Heart left ventricle (tissue), 16 donors: ENCODE measurements at regions of chr5 and their contacts with region 1.

Region 1: GRCh38 chr5:181159286-181159829 is 12.0 kb downstream of the OR2V2 start:
- DNase-seq: peak; percentile 79 to 91 (median 81)
- ATAC-seq: peak; percentile 72 to 94 (median 92)
- H3K4me3 ChIP-seq: no peak overlapping the region
- H3K27ac ChIP-seq: peak overlapping the region in 1 of 12 donors; percentile 81
- H3K4me1 ChIP-seq: peaks cover 0 to 14% (median 2%) of the 10 kb centered on the region in 12 donors
- H3K27me3 ChIP-seq: peaks cover 0 to 14% (median 9%) of the 10 kb centered on the region in 9 donors
- CTCF ChIP-seq: peak; percentile 83 to 91 (median 85)
- POLR2A ChIP-seq: no peak

Region 2: GRCh38 chr5:181052672-181053487 is 106.5 kb before region 1 on chr5:
- intact Hi-C with region 1: loop called in 1 of 10 experiments (anchors 10 kb)
- DNase-seq: peak in 2 of 5 donors; percentile 49 to 65
- ATAC-seq: peak in 3 of 4 donors; percentile 36 to 55 (median 47)
- H3K4me3 ChIP-seq: peak overlapping the region; percentile 34 to 72 (median 60)
- H3K27ac ChIP-seq: peak overlapping the region; percentile 57 to 94 (median 88)
- H3K4me1 ChIP-seq: peaks cover 0 to 42% (median 18%) of the 10 kb centered on the region in 12 donors
- H3K27me3 ChIP-seq: peaks cover 20 to 88% (median 66%) of the 10 kb centered on the region in 9 donors
- CTCF ChIP-seq: no peak
- POLR2A ChIP-seq: no peak

Region 3: GRCh38 chr5:181138258-181138657 is 21.1 kb before region 1 on chr5:
- intact Hi-C with region 1: no loop called
- DNase-seq: no peak
- ATAC-seq: no peak
- H3K4me3 ChIP-seq: no peak overlapping the region
- H3K27ac ChIP-seq: no peak overlapping the region
- H3K4me1 ChIP-seq: peaks cover 0 to 8% (median 0%) of the 10 kb centered on the region in 12 donors
- H3K27me3 ChIP-seq: peaks cover 0 to 21% (median 0%) of the 10 kb centered on the region in 9 donors
- CTCF ChIP-seq: no peak
- POLR2A ChIP-seq: no peak